ENCODE measurements at regions of chr20 and their contacts with region 1.

Region 1: DNA sequence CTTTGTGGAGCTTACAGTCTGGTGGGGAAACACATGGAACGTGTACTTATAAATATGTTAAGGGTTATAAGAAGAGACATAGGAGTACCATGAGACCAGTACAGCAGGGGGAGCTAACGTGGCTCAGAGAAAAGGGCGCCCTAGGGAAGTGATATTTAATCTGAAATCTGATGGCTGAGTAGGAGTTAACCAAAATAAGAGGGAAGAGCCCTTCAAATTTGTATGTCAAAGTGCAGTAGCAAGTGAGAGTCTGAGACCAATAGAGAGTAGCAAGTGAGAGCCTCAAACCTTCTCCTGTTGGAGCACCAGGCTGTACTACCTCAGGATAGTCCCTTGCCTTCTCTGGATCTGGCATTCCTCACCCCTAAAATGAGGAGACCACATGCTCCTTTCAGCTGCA is 6.1 kb upstream of the PKIG start:
- DNase-seq: peak; percentile 18 to 59 (median 52)
- ATAC-seq: peak; percentile 85
- H3K4me3 ChIP-seq: no peak overlapping the region
- H3K27ac ChIP-seq: peak overlapping the region; percentile 66
- H3K4me1 ChIP-seq: peaks cover 0 to 16% of the 10 kb centered on the region in 2 experiments; a peak in 3 of 5 replicates
- H3K27me3 ChIP-seq: no peaks in the 10 kb centered on the region
- CTCF ChIP-seq: peak; percentile 37 to 61 (median 53); a peak in 5 of 6 replicates
- EP300 ChIP-seq: no peak
- POLR2A ChIP-seq: no peak
- RAD21 ChIP-seq: peak; percentile 45 to 63

Region 2: GRCh38 chr20:44586289-44586911 is 10.1 kb after region 1 on chr20:
- CTCF ChIA-PET with region 1: no interaction called
- POLR2A ChIA-PET with region 1: interaction called, 13 read pairs
- in situ Hi-C with region 1: no loop called
- intact Hi-C with region 1: no loop called
- DNase-seq: no peak
- ATAC-seq: no peak
- H3K4me3 ChIP-seq: no peak overlapping the region
- H3K27ac ChIP-seq: no peak overlapping the region
- H3K4me1 ChIP-seq: peaks cover 5 to 9% of the 10 kb centered on the region in 2 experiments
- H3K27me3 ChIP-seq: peaks cover 0 to 11% of the 10 kb centered on the region in 2 experiments; a peak in 2 of 5 replicates
- CTCF ChIP-seq: no peak
- EP300 ChIP-seq: no peak
- POLR2A ChIP-seq: no peak
- RAD21 ChIP-seq: no peak